ENCODE measurements at regions of chr15 and their contacts with region 1.

Region 1: GRCh38 chr15:97909291-97909891 is 51.1 kb upstream of the ARRDC4 start:
- DNase-seq: peak; percentile 65
- ATAC-seq: peak; percentile 78
- H3K4me3 Mint-ChIP-seq: no peak overlapping the region
- H3K27ac Mint-ChIP-seq: no peak overlapping the region
- H3K4me1 Mint-ChIP-seq: no peaks in the 10 kb centered on the region
- H3K27me3 Mint-ChIP-seq: peaks cover 11% of the 10 kb centered on the region
- CTCF ChIP-seq: peak; percentile 68

Region 2: GRCh38 chr15:97921296-97921865 is 12.0 kb after region 1 on chr15:
- CTCF ChIA-PET with region 1: no interaction called
- POLR2A ChIA-PET with region 1: no interaction called
- intact Hi-C with region 1: no loop called
- DNase-seq: no peak
- ATAC-seq: no peak
- H3K4me3 Mint-ChIP-seq: no peak overlapping the region
- H3K27ac Mint-ChIP-seq: no peak overlapping the region
- H3K4me1 Mint-ChIP-seq: no peaks in the 10 kb centered on the region
- H3K27me3 Mint-ChIP-seq: peaks cover 5% of the 10 kb centered on the region
- CTCF ChIP-seq: no peak

Region 3: DNA sequence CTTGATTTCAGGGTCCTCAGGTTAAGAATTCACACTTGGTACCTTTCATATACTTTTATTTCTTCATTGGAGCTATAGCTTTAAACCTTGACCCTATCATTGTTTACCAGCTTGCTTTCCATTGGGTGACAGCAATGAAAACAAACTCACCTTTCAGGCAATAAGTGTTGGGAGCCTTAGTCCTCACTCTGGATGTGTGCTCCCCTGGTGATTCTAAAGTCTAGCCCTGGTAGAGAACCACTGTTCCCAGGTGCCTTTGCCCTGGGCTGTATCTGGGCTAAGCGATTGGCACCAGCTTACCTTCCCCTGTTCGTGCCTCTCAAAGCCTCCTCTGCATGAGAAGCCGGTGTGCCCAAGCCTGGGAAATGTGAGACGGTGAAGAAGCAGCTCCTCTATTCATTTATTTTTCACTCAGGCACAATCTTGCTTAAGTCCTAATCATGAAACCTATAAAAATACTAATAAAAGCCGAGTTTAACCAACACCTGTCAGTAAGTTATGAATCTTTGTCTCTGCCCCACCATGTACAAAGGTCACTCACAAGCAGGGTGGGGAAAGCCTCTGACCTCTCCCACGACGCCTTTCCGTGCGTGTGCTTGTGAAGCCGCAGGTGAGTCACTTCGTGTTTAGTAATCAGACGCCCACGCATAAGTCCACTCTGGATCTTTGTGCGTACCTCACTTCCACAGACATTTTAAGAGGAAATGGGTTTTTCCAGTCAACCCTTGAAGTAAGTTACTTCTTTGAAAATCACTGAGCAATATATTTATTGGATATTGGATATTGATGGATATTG is 38.3 kb after region 1 on chr15:
- CTCF ChIA-PET with region 1: no interaction called
- POLR2A ChIA-PET with region 1: no interaction called
- intact Hi-C with region 1: no loop called
- DNase-seq: no peak
- ATAC-seq: no peak
- H3K4me3 Mint-ChIP-seq: no peak overlapping the region
- H3K27ac Mint-ChIP-seq: no peak overlapping the region
- H3K4me1 Mint-ChIP-seq: no peaks in the 10 kb centered on the region
- H3K27me3 Mint-ChIP-seq: peaks cover 2% of the 10 kb centered on the region
- CTCF ChIP-seq: no peak

Region 4: GRCh38 chr15:98177924-98178592 is 268.7 kb after region 1 on chr15:
- CTCF ChIA-PET with region 1: interaction called, 17 read pairs
- POLR2A ChIA-PET with region 1: no interaction called
- intact Hi-C with region 1: loop called (anchors 5 kb)
- DNase-seq: peak; percentile 31
- ATAC-seq: peak; percentile 74
- H3K4me3 Mint-ChIP-seq: no peak overlapping the region
- H3K27ac Mint-ChIP-seq: no peak overlapping the region
- H3K4me1 Mint-ChIP-seq: peaks cover 6% of the 10 kb centered on the region
- H3K27me3 Mint-ChIP-seq: peaks cover 14% of the 10 kb centered on the region
- CTCF ChIP-seq: peak; percentile 54

Region 5: GRCh38 chr15:98292442-98293240 is 383.2 kb after region 1 on chr15:
- CTCF ChIA-PET with region 1: interaction called, 4 read pairs
- POLR2A ChIA-PET with region 1: no interaction called
- intact Hi-C with region 1: loop called (anchors 10 kb)
- DNase-seq: peak; percentile 63
- ATAC-seq: peak; percentile 67
- H3K4me3 Mint-ChIP-seq: no peak overlapping the region
- H3K27ac Mint-ChIP-seq: no peak overlapping the region
- H3K4me1 Mint-ChIP-seq: peaks cover 2% of the 10 kb centered on the region
- H3K27me3 Mint-ChIP-seq: peaks cover 13% of the 10 kb centered on the region
- CTCF ChIP-seq: peak; percentile 77

Region 6: GRCh38 chr15:98428253-98428989 is 519.0 kb after region 1 on chr15:
- CTCF ChIA-PET with region 1: interaction called, 3 read pairs
- POLR2A ChIA-PET with region 1: no interaction called
- intact Hi-C with region 1: loop called (anchors 10 kb)
- DNase-seq: peak; percentile 67
- ATAC-seq: peak; percentile 88
- H3K4me3 Mint-ChIP-seq: peak overlapping the region; percentile 43
- H3K27ac Mint-ChIP-seq: no peak overlapping the region
- H3K4me1 Mint-ChIP-seq: peaks cover 3% of the 10 kb centered on the region
- H3K27me3 Mint-ChIP-seq: peaks cover 35% of the 10 kb centered on the region
- CTCF ChIP-seq: peak; percentile 80

Measured in activated CD8-positive, alpha-beta T cell treated with anti-CD3 and anti-CD28 coated beads for 36 hours (primary cell).